Lower leg skin (tissue), 4 donors: ENCODE measurements at regions of chr13 and their contacts with region 1.

Region 1: DNA sequence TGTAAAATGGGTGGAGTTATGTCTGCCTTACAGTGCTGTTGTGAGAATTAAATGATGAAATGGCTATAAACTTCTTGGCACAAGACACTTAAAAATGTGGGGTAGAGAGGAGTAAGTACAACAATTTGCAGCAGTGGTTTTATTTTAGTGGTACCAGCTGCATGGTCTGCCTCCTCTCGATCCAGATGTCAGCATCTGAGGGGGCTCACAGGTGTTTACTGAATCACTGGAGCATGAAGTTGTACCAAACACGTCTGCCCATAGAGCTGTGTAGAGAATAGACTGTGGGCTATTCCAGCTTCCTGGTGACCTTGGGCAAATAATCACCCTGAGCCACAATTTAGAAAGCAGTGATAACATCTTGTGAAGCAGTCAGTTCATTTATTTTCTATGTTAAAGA is 11.1 kb downstream of the SLC10A2 start:
- DNase-seq: no peak
- H3K4me3 ChIP-seq: no peak overlapping the region
- CTCF ChIP-seq: no peak
- POLR2A ChIP-seq: no peak

Region 2: GRCh38 chr13:101811284-101811839 is 1243.8 kb before region 1 on chr13:
- intact Hi-C with region 1: no loop called
- DNase-seq: no peak
- H3K4me3 ChIP-seq: no peak overlapping the region
- CTCF ChIP-seq: no peak
- POLR2A ChIP-seq: no peak

Region 3: GRCh38 chr13:102951808-102952207 is 103.4 kb before region 1 on chr13:
- intact Hi-C with region 1: loop called (anchors 10 kb)
- DNase-seq: no peak
- H3K4me3 ChIP-seq: no peak overlapping the region
- CTCF ChIP-seq: no peak
- POLR2A ChIP-seq: no peak